ENCODE measurements at regions of chr1 and their contacts with region 1.

Region 1: GRCh38 chr1:145720877-145721671 is 1.8 kb downstream of the CD160 start:
- DNase-seq: peak in 1 of 2 experiments; percentile 95
- H3K4me3 ChIP-seq: peak overlapping the region; percentile 23 to 59 (median 51); a peak in 7 of 8 replicates
- H3K27ac ChIP-seq: no peak overlapping the region
- H3K4me1 ChIP-seq: no peaks in the 10 kb centered on the region; a peak in 2 of 7 replicates
- H3K27me3 ChIP-seq: peaks cover 0 to 7% (median 7%) of the 10 kb centered on the region in 4 experiments; a peak in 5 of 7 replicates
- CTCF ChIP-seq: peak; percentile 83 to 93 (median 85)
- EP300 ChIP-seq: no peak; a peak in 1 of 3 replicates
- POLR2A ChIP-seq: no peak
- RAD21 ChIP-seq: peak; percentile 85 to 89

Region 2: DNA sequence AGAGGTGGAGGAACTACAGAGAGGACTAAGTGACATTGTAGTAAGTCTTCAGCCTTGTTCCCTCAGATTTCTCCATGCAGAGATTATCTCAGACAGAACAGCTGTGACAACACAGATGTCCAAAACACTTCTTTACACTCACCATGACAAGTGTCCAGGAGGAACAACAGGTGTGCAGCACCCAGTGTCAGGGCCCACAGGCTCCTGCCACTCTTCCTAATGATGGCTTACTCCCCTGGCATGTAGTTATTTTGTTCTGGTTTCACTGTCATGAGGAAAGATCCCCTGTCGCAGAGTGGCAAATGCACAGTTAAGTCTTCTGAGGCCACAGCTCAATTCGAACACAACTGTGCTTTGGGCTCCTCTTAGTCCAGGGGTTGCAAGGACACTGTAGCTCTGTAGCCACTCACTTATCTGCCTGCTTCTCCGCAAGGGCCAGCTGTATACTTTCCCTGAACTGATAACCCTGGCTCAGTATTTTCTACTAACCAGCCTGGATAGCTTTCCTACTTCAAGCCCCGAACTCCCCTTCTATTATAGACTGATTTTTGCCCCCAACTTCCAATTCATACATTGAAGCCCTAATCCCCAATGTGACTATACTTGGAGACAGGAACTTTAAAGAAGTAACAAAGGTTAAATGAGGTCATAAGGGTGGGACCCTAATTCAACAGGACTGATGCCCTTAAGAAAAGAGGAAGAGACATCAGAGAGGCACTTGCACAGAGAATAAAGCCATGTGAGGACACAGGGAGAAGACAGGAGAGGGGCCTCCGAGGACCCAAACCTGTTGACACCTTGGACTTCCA is 25.0 kb before region 1 on chr1:
- CTCF ChIA-PET with region 1: interaction called, 12 read pairs
- POLR2A ChIA-PET with region 1: no interaction called
- DNase-seq: no peak
- H3K4me3 ChIP-seq: no peak overlapping the region
- H3K27ac ChIP-seq: no peak overlapping the region
- H3K4me1 ChIP-seq: no peaks in the 10 kb centered on the region
- H3K27me3 ChIP-seq: peaks cover 0 to 2% (median 0%) of the 10 kb centered on the region in 4 experiments; a peak in 1 of 7 replicates
- CTCF ChIP-seq: no peak
- EP300 ChIP-seq: no peak
- POLR2A ChIP-seq: no peak
- RAD21 ChIP-seq: no peak

Region 3: GRCh38 chr1:145708063-145708699 is 12.9 kb before region 1 on chr1:
- CTCF ChIA-PET with region 1: interaction called, 20 read pairs
- POLR2A ChIA-PET with region 1: interaction called, 4 read pairs
- DNase-seq: no peak
- H3K4me3 ChIP-seq: no peak overlapping the region
- H3K27ac ChIP-seq: no peak overlapping the region
- H3K4me1 ChIP-seq: peaks cover 0 to 10% (median 5%) of the 10 kb centered on the region in 4 experiments; a peak in 6 of 7 replicates
- H3K27me3 ChIP-seq: no peaks in the 10 kb centered on the region
- CTCF ChIP-seq: no peak
- EP300 ChIP-seq: no peak
- POLR2A ChIP-seq: no peak
- RAD21 ChIP-seq: no peak

Region 4: DNA sequence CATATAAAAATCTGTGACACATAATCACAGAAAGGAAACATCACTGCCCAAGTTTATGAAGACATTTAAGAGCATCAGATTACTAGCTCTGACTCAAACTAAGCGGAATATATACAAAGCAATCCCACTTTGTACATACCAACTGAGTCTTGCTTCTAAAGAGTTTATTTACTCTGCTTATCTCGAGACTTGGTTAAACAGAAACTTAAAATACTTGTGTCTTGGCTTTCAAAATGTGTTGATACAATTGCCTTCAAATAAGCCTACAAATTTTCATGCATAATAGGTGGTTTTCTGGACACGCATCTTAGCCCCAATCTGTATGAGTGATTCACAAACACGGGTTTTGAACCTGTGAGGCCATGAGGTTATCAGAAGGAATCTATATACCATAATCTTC is 19.2 kb after region 1 on chr1:
- CTCF ChIA-PET with region 1: no interaction called
- POLR2A ChIA-PET with region 1: no interaction called
- DNase-seq: no peak
- H3K4me3 ChIP-seq: no peak overlapping the region
- H3K27ac ChIP-seq: no peak overlapping the region
- H3K4me1 ChIP-seq: no peaks in the 10 kb centered on the region
- H3K27me3 ChIP-seq: no peaks in the 10 kb centered on the region
- CTCF ChIP-seq: no peak
- EP300 ChIP-seq: no peak
- POLR2A ChIP-seq: no peak
- RAD21 ChIP-seq: no peak

Region 5: GRCh38 chr1:145765574-145765973 is 44.5 kb after region 1 on chr1:
- CTCF ChIA-PET with region 1: no interaction called
- POLR2A ChIA-PET with region 1: no interaction called
- DNase-seq: no peak
- H3K4me3 ChIP-seq: no peak overlapping the region
- H3K27ac ChIP-seq: no peak overlapping the region
- H3K4me1 ChIP-seq: no peaks in the 10 kb centered on the region
- H3K27me3 ChIP-seq: no peaks in the 10 kb centered on the region
- CTCF ChIP-seq: no peak
- EP300 ChIP-seq: no peak
- POLR2A ChIP-seq: no peak
- RAD21 ChIP-seq: no peak

Region 6: DNA sequence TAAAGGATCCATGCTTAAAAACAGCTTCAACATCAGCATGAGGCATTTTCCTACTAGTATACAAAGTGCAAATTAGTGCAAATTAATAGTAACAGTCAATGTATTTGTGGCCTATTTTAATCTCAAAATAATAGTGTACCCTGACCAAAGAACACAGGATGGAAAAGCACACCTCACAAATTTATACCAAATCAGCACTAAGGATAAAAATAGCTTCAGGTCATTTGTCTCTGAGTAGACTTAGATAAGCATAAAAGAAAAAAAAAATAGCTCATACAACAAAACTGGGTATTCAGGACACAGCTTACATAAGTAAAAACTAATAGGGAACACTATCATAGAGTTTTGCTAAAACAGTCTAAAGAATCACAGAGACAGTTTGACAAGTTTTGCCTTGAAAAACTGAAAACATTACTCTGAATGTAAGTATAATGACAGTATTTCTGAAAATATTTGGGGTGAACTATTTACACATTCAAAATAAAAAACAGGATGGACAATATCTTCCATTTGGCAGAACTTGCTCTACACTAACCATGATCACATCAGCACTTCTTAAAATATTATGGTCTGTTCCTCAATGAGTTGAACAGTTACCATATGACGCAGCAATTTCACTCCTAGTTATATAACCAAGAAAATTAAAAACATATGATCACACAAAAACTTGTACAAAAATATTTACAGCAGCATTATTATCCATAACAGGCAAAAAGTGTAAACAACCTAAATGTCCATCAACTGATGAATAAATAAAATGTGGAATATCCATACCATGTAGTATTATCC is 56.5 kb after region 1 on chr1:
- CTCF ChIA-PET with region 1: no interaction called
- POLR2A ChIA-PET with region 1: no interaction called
- DNase-seq: no peak
- H3K4me3 ChIP-seq: no peak overlapping the region
- H3K27ac ChIP-seq: no peak overlapping the region
- H3K4me1 ChIP-seq: no peaks in the 10 kb centered on the region
- H3K27me3 ChIP-seq: no peaks in the 10 kb centered on the region
- CTCF ChIP-seq: no peak
- EP300 ChIP-seq: no peak
- POLR2A ChIP-seq: no peak
- RAD21 ChIP-seq: no peak